A673 (cell line): ENCODE measurements at regions of chr11 and their contacts with region 1.

Region 1: DNA sequence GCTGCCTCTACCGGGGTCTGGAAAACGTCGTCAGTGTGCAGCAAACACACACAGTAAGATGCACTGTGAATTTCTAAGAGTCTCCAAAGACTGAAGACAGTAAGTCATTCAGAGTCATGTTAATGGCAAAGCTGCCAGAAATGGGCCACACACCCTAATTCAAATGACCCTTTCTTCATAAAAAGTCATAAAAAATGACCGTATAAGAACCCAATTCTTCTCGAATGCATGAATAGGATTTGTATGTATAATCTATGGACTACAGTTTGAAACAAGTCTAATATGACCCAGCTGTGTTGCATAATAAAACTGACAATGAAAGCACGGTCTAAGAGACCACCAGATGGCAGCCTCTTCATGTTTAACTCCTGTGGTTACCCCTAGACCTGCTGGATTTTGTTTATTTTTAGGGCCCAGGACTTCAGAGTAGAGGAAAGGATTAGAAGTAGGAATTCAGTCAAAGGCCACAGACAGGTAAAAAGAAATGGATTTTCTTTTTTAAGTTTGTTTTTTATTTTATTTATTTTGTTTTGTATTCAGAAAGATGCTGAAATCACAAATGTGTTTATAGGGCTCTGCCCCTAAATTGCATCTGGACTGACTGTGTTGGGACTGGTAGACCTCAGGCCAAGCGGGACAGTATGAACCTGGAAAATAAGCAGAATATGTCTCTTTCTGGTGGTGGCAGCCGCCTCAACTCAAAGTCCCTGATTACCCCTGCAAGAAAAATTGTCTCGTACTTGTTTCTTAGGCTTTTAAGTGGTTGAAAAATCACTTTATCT is 32.1 kb upstream of the SLC5A12 start:
- DNase-seq: peak; percentile 89
- H3K4me3 ChIP-seq: no peak overlapping the region
- H3K27ac ChIP-seq: no peak overlapping the region
- H3K4me1 ChIP-seq: no peaks in the 10 kb centered on the region
- H3K27me3 ChIP-seq: peaks cover 74% of the 10 kb centered on the region
- CTCF ChIP-seq: peak; percentile 100

Region 2: GRCh38 chr11:26778000-26778757 is 24.3 kb after region 1 on chr11:
- CTCF ChIA-PET with region 1: no interaction called
- POLR2A ChIA-PET with region 1: no interaction called
- intact Hi-C with region 1: no loop called
- DNase-seq: peak; percentile 52
- H3K4me3 ChIP-seq: no peak overlapping the region
- H3K27ac ChIP-seq: no peak overlapping the region
- H3K4me1 ChIP-seq: peaks cover 10% of the 10 kb centered on the region
- H3K27me3 ChIP-seq: peaks cover 8% of the 10 kb centered on the region
- CTCF ChIP-seq: no peak

Region 3: DNA sequence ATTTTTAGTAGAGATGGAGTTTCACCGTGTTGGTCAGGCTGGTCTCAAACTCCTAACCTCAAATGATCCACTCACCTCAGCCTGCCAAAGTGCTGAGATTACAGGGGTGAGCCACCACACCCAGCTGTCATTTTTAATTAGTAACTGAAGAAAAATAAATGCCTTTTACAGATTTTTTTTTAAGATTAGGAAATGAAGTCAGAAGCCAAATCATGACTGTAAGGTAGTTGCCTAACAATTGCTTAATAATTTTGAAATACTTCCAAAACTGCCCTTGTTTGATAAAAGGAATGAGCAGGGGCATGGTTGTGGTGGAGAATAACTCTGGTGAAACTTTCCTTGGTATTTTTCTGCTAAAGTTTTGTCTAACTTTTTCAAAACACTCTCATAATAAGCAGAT is 66.8 kb after region 1 on chr11:
- CTCF ChIA-PET with region 1: no interaction called
- POLR2A ChIA-PET with region 1: no interaction called
- intact Hi-C with region 1: no loop called
- DNase-seq: no peak
- H3K4me3 ChIP-seq: no peak overlapping the region
- H3K27ac ChIP-seq: no peak overlapping the region
- H3K4me1 ChIP-seq: no peaks in the 10 kb centered on the region
- H3K27me3 ChIP-seq: peaks cover 15% of the 10 kb centered on the region
- CTCF ChIP-seq: no peak

Region 4: DNA sequence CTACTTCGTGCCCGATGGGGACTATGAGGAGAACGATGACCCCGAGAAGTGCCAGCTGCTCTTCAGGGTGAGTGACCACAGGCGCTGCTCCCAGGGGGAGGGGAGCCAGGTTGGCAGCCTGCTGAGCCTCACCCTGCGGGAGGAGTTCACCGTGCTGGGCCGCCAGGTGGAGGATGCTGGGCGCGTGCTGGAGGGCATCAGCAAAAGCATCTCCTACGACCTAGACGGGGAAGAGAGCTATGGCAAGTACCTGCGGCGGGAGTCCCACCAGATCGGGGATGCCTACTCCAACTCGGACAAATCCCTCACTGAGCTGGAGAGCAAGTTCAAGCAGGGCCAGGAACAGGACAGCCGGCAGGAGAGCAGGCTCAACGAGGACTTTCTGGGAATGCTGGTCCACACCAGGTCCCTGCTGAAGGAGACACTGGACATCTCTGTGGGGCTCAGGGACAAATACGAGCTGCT is 240.7 kb after region 1 on chr11:
- CTCF ChIA-PET with region 1: no interaction called
- POLR2A ChIA-PET with region 1: no interaction called
- intact Hi-C with region 1: no loop called
- DNase-seq: no peak
- H3K4me3 ChIP-seq: no peak overlapping the region
- H3K27ac ChIP-seq: no peak overlapping the region
- H3K4me1 ChIP-seq: no peaks in the 10 kb centered on the region
- H3K27me3 ChIP-seq: peaks cover 88% of the 10 kb centered on the region
- CTCF ChIP-seq: no peak

Region 5: GRCh38 chr11:27124514-27125264 is 370.8 kb after region 1 on chr11:
- CTCF ChIA-PET with region 1: no interaction called
- POLR2A ChIA-PET with region 1: no interaction called
- intact Hi-C with region 1: loop called (anchors 1 kb)
- DNase-seq: peak; percentile 49
- H3K4me3 ChIP-seq: no peak overlapping the region
- H3K27ac ChIP-seq: no peak overlapping the region
- H3K4me1 ChIP-seq: no peaks in the 10 kb centered on the region
- H3K27me3 ChIP-seq: peaks cover 59% of the 10 kb centered on the region
- CTCF ChIP-seq: peak; percentile 54

Region 6: DNA sequence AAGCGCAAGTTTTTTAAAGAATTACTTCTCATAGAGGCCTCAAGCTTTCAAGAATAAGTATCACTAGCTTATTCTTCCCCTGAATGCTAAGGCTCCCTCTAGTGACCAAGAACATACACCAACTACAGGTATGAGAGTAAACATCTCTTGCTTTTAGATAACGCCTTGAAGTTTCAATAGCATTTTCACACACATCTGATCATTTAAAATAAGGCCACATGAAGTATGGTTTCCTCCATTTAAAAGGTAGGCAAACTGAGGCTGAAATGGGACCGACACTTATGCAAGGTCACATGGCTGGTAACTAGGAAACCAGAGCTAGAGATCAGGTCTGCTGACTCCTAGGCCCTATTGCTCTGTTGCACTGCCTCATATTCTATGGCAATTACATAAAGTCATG is 542.6 kb after region 1 on chr11:
- CTCF ChIA-PET with region 1: no interaction called
- POLR2A ChIA-PET with region 1: no interaction called
- intact Hi-C with region 1: loop called (anchors 5 kb)
- DNase-seq: peak; percentile 91
- H3K4me3 ChIP-seq: no peak overlapping the region
- H3K27ac ChIP-seq: no peak overlapping the region
- H3K4me1 ChIP-seq: peaks cover 18% of the 10 kb centered on the region
- H3K27me3 ChIP-seq: no peaks in the 10 kb centered on the region
- CTCF ChIP-seq: peak; percentile 100